CD14-positive monocyte (primary cell): ENCODE measurements at regions of chr15 and their contacts with region 1.

Region 1: DNA sequence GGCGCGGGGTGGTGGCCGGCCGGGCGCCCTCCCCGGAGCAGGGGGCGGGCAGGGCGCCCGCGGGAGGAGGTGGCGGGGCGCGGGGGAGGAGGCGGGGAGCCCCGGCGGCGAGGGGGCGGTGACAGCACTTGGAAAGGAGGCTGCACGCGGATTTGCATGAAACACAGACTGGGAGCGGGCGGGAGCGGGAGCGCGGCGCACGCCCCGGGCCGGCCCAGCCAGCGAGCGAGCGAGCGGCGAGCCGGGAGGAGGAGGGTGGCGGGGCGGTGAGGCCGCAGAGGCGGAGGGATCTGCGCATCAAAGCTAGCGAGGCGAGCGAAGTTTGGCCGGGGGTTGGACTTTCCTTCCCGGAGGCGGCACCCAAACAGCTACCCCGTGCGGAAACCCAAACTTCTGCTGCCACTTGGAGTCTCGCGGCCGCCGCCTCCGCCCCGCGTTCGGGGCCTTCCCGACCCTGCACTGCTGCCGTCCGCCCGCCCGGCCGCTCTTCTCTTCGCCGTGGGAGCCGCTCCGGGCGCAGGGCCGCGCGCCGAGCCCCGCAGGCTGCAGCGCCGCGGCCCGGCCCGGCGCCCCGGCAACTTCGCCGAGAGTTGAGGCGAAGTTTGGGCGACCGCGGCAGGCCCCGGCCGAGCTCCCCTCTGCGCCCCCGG is at the start of gene SMAD3:
- DNase-seq: peak; percentile 86 to 92 (median 89)
- H3K4me3 ChIP-seq: peak within 1 kb of the TSS; percentile 71 to 100 (median 79)
- H3K4me3 Mint-ChIP-seq: peak within 1 kb of the TSS; percentile 99 to 100
- H3K27ac ChIP-seq: peak within 1 kb of the TSS; percentile 83 to 96
- H3K27ac Mint-ChIP-seq: peak within 1 kb of the TSS; percentile 94 to 99 (median 98)
- H3K4me1 ChIP-seq: peaks cover 36 to 46% of the 10 kb centered on the region in 2 donors
- H3K4me1 Mint-ChIP-seq: peaks cover 46% of the 10 kb centered on the region
- H3K27me3 ChIP-seq: no peaks in the 10 kb centered on the region
- H3K27me3 Mint-ChIP-seq: peaks cover 2 to 7% (median 6%) of the 10 kb centered on the region in 3 donors
- CTCF ChIP-seq: no peak
- polyA plus RNA-seq, gene SMAD3: 4.4 to 41.7 (median 5.4) TPM

Region 2: DNA sequence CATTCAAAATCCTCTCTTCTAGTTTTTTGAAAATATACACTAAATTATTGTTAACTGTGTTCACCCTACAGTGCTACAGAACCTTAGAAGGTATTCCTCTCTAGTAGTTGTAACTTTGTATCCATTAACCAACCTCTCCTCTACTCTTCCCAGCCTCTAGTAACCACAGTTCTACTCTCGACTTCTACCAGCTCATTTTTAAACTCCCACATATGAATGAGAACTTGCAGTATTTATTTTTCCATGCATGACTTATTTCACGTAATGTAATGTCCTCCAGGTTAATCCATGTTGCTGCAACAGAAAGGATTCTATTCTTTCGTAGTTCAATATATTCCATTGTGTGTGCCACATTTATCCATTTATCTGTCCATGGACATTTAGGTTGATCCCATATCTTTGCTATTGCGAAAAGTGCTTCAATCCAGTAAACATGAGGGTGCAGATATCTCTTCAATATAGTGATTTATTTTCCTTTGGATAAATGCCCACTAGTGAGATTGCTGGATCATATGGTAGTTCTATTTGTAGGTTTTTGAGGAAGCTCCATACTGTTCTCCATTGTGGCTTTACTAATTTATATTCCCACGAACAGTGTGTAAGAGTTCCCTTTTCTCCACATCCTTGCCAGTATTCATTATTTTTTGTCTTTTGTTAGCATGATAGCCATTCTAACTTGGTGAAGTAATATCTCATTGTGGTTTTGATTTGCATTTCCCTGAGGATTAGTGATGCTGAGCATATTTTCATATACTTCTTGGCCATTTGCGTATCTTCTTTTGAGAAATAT is 113.8 kb before region 1 on chr15:
- intact Hi-C with region 1: loop called (anchors 5 kb)
- DNase-seq: peak; percentile 38 to 55 (median 52)
- H3K4me3 ChIP-seq: no peak overlapping the region
- H3K4me3 Mint-ChIP-seq: no peak overlapping the region
- H3K27ac ChIP-seq: no peak overlapping the region
- H3K27ac Mint-ChIP-seq: peak overlapping the region in 2 of 7 donors; percentile 4 to 27
- H3K4me1 ChIP-seq: peaks cover 9 to 18% of the 10 kb centered on the region in 2 donors
- H3K4me1 Mint-ChIP-seq: peaks cover 26% of the 10 kb centered on the region
- H3K27me3 ChIP-seq: no peaks in the 10 kb centered on the region
- H3K27me3 Mint-ChIP-seq: peaks cover 0 to 6% (median 0%) of the 10 kb centered on the region in 3 donors
- CTCF ChIP-seq: no peak

Region 3: DNA sequence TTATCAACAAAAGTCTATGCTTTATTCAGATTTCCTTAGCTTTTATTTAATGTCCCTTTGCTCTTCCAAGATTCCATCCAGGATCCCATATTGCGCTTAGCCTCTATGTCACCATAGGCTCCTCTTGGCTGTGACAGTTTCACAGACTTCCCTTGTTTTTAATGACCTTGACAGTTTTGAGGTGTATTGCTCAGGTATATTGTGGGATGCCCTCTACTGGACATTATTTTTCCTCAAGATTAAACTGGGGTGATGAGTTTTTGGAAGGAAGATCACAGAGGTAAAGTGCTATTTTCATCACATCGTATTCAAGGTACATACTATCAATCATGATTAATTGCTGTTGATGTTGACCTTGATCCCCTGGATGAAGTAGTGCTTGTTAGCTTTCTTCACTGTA is 99.3 kb before region 1 on chr15:
- intact Hi-C with region 1: no loop called
- DNase-seq: no peak
- H3K4me3 ChIP-seq: no peak overlapping the region
- H3K4me3 Mint-ChIP-seq: no peak overlapping the region
- H3K27ac ChIP-seq: no peak overlapping the region
- H3K27ac Mint-ChIP-seq: no peak overlapping the region
- H3K4me1 ChIP-seq: peaks cover 8 to 11% of the 10 kb centered on the region in 2 donors
- H3K4me1 Mint-ChIP-seq: peaks cover 9% of the 10 kb centered on the region
- H3K27me3 ChIP-seq: no peaks in the 10 kb centered on the region
- H3K27me3 Mint-ChIP-seq: peaks cover 0 to 1% (median 0%) of the 10 kb centered on the region in 3 donors
- CTCF ChIP-seq: no peak

Region 4: GRCh38 chr15:67024314-67024997 is 41.1 kb before region 1 on chr15:
- intact Hi-C with region 1: loop called in 1 of 2 experiments (anchors 5 kb)
- DNase-seq: peak; percentile 93 to 95 (median 95)
- H3K4me3 ChIP-seq: peak overlapping the region in 2 of 3 experiments; percentile 11 to 54
- H3K4me3 Mint-ChIP-seq: peak overlapping the region; percentile 47 to 70
- H3K27ac ChIP-seq: peak overlapping the region; percentile 84 to 97
- H3K27ac Mint-ChIP-seq: peak overlapping the region; percentile 94 to 99 (median 99)
- H3K4me1 ChIP-seq: peaks cover 74 to 81% of the 10 kb centered on the region in 2 donors
- H3K4me1 Mint-ChIP-seq: peaks cover 77% of the 10 kb centered on the region
- H3K27me3 ChIP-seq: no peaks in the 10 kb centered on the region
- H3K27me3 Mint-ChIP-seq: peaks cover 0 to 2% (median 0%) of the 10 kb centered on the region in 3 donors
- CTCF ChIP-seq: no peak

Region 5: GRCh38 chr15:67101911-67102598 is 36.5 kb after region 1 on chr15:
- intact Hi-C with region 1: loop called (anchors 2 to 5 kb)
- DNase-seq: peak in 2 of 3 donors; percentile 72 to 81
- H3K4me3 ChIP-seq: no peak overlapping the region
- H3K4me3 Mint-ChIP-seq: no peak overlapping the region
- H3K27ac ChIP-seq: peak overlapping the region in 1 of 2 donors; percentile 73
- H3K27ac Mint-ChIP-seq: no peak overlapping the region
- H3K4me1 ChIP-seq: peaks cover 81 to 87% of the 10 kb centered on the region in 2 donors
- H3K4me1 Mint-ChIP-seq: peaks cover 29% of the 10 kb centered on the region
- H3K27me3 ChIP-seq: no peaks in the 10 kb centered on the region
- H3K27me3 Mint-ChIP-seq: peaks cover 0 to 3% (median 3%) of the 10 kb centered on the region in 3 donors
- CTCF ChIP-seq: no peak

Region 6: GRCh38 chr15:67396114-67396513 is 330.5 kb after region 1 on chr15:
- intact Hi-C with region 1: no loop called
- DNase-seq: peak; percentile 18 to 38 (median 23)
- H3K4me3 ChIP-seq: peak overlapping the region in 1 of 3 experiments; percentile 3
- H3K4me3 Mint-ChIP-seq: peak overlapping the region; percentile 10 to 51
- H3K27ac ChIP-seq: no peak overlapping the region
- H3K27ac Mint-ChIP-seq: peak overlapping the region in 1 of 7 donors; percentile 21
- H3K4me1 ChIP-seq: peaks cover 10 to 11% of the 10 kb centered on the region in 2 donors
- H3K4me1 Mint-ChIP-seq: peaks cover 10% of the 10 kb centered on the region
- H3K27me3 ChIP-seq: no peaks in the 10 kb centered on the region
- H3K27me3 Mint-ChIP-seq: peaks cover 0 to 4% (median 0%) of the 10 kb centered on the region in 3 donors
- CTCF ChIP-seq: no peak